Esophagus muscularis mucosa (tissue), 4 donors: ENCODE measurements at regions of chrX and their contacts with region 1.

Region 1: GRCh38 chrX:15674841-15675489 is 10.4 kb upstream of the CLTRN start:
- DNase-seq: peak; percentile 96
- H3K4me3 ChIP-seq: peak overlapping the region; percentile 60 to 88 (median 79)
- H3K27ac ChIP-seq: peak overlapping the region; percentile 92 to 99 (median 94)
- H3K4me1 ChIP-seq: peaks cover 14 to 29% (median 17%) of the 10 kb centered on the region in 4 donors
- H3K27me3 ChIP-seq: no peaks in the 10 kb centered on the region
- CTCF ChIP-seq: no peak
- EP300 ChIP-seq: no peak
- POLR2A ChIP-seq: peak; percentile 59

Region 2: GRCh38 chrX:15335135-15336022 is 339.6 kb before region 1 on chrX and contains the start of gene PIGA:
- intact Hi-C with region 1: loop called (anchors 10 kb)
- DNase-seq: peak; percentile 98
- H3K4me3 ChIP-seq: peak within 1 kb of the TSS; percentile 62 to 78 (median 74)
- H3K27ac ChIP-seq: peak within 1 kb of the TSS; percentile 76 to 91 (median 84)
- H3K4me1 ChIP-seq: peaks cover 0 to 9% (median 6%) of the 10 kb centered on the region in 4 donors
- H3K27me3 ChIP-seq: no peaks in the 10 kb centered on the region
- CTCF ChIP-seq: no peak
- EP300 ChIP-seq: no peak
- POLR2A ChIP-seq: peak; percentile 86
- total RNA-seq, gene PIGA: 3.2 to 6.6 (median 4.2) TPM

Region 3: GRCh38 chrX:15598036-15598435 is 76.9 kb before region 1 on chrX:
- intact Hi-C with region 1: no loop called
- DNase-seq: no peak
- H3K4me3 ChIP-seq: no peak overlapping the region
- H3K27ac ChIP-seq: no peak overlapping the region
- H3K4me1 ChIP-seq: no peaks in the 10 kb centered on the region
- H3K27me3 ChIP-seq: no peaks in the 10 kb centered on the region
- CTCF ChIP-seq: no peak
- EP300 ChIP-seq: no peak
- POLR2A ChIP-seq: no peak

Region 4: GRCh38 chrX:15714529-15714928 is 39.6 kb after region 1 on chrX:
- intact Hi-C with region 1: no loop called
- DNase-seq: no peak
- H3K4me3 ChIP-seq: no peak overlapping the region
- H3K27ac ChIP-seq: no peak overlapping the region
- H3K4me1 ChIP-seq: no peaks in the 10 kb centered on the region
- H3K27me3 ChIP-seq: no peaks in the 10 kb centered on the region
- CTCF ChIP-seq: no peak
- EP300 ChIP-seq: no peak
- POLR2A ChIP-seq: no peak